ENCODE measurements at regions of chr1 and their contacts with region 1.

Region 1: DNA sequence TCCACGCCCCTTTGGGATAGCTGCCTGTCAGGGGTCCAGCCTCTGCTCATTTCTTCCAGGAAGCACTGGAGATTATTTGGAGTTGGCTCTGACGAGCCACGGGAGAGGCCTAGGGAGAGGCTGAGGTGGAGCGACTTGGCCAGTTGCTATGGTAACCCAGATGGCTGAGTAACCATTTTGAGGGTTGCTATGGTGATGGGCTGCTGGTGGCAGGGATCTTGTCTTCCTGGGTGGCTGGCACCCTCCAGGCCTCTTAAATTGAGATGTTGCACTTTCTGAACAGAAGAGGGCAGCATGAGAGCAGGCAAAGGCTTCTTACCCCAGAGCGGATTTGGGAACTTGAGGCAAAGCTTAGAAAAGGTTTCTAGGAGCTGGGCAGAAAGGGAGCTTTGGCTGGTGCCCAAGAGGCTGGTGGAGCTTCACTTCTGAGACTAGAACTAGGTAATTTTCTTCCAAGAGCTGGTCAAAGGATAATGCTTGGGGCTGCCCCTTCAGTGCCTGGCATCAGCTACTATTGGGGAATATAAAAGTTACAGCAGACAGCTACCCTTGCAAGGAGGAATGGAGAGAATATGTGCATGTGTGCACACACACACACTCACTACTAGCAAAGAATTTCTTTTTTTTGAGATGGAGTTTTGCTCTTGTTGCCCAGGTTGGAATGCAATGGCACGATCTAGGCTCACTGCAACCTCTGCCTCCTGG is 72.5 kb downstream of the NDUFS5 start:
- DNase-seq: peak; percentile 61
- H3K4me3 ChIP-seq: no peak overlapping the region
- H3K27ac ChIP-seq: no peak overlapping the region
- H3K4me1 ChIP-seq: peaks cover 12% of the 10 kb centered on the region
- H3K27me3 ChIP-seq: no peaks in the 10 kb centered on the region
- CTCF ChIP-seq: peak; percentile 65 to 68
- POLR2A ChIP-seq: no peak

Region 2: GRCh38 chr1:38919130-38919529 is 179.6 kb before region 1 on chr1:
- CTCF ChIA-PET with region 1: no interaction called
- POLR2A ChIA-PET with region 1: no interaction called
- dilution Hi-C with region 1: no loop called
- intact Hi-C with region 1: no loop called
- DNase-seq: no peak
- H3K4me3 ChIP-seq: no peak overlapping the region
- H3K27ac ChIP-seq: no peak overlapping the region
- H3K4me1 ChIP-seq: no peaks in the 10 kb centered on the region
- H3K27me3 ChIP-seq: no peaks in the 10 kb centered on the region
- CTCF ChIP-seq: no peak
- POLR2A ChIP-seq: no peak

Region 3: DNA sequence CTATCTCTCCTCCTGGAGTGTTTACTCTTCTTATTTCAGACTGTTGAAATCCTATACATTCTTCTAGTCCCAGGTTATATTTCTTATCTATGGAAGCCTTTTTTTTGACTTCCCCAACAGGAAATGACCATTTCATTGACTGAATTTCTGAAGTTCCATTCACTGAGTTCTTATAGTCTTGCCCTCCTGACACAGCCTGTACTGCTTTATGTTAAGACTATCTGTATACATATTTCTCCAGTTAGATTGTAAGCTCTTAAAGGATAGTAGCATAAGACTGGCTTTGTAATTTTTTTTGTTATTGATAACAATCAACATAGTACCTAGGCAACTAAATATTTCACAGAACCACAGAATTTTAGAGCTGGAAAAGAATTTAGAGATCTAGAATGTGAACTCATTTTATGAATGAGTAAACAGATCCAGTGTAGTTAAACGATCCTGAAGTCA is 90.9 kb after region 1 on chr1:
- CTCF ChIA-PET with region 1: interaction called, 73 read pairs
- POLR2A ChIA-PET with region 1: interaction called, 3 read pairs
- dilution Hi-C with region 1: no loop called
- intact Hi-C with region 1: loop called (anchors 1 kb)
- DNase-seq: peak; percentile 81
- H3K4me3 ChIP-seq: peak overlapping the region in 2 of 3 experiments; percentile 17 to 37
- H3K27ac ChIP-seq: peak overlapping the region; percentile 97
- H3K4me1 ChIP-seq: peaks cover 95% of the 10 kb centered on the region
- H3K27me3 ChIP-seq: no peaks in the 10 kb centered on the region
- CTCF ChIP-seq: no peak
- POLR2A ChIP-seq: no peak

Region 4: DNA sequence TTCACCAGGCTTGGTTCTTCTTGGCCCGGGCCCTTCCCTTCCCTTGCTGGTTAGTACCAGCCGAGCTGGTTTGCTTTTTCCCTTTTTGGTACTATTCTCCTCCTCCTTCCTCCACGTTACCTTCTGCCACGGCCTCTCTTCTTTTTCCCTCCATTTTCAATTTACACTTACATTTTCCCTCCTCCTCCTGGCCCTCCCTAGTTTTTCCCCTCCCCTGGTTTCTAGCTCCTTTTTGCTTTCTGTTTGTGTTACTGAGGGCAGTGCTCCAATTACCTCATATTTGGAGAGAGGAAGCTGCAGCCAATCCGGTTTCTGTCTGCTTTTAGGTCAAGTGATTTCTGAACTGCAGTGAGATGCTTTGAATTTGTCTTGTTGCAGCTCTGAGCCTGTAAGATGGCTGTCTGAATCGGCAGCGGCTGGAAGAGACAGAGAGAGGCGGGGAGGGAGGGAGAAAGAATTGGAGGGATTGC is 169.4 kb after region 1 on chr1:
- CTCF ChIA-PET with region 1: interaction called, 16 read pairs
- POLR2A ChIA-PET with region 1: no interaction called
- dilution Hi-C with region 1: no loop called
- intact Hi-C with region 1: no loop called
- DNase-seq: peak; percentile 78
- H3K4me3 ChIP-seq: peak overlapping the region in 2 of 3 experiments; percentile 9 to 49
- H3K27ac ChIP-seq: peak overlapping the region; percentile 70
- H3K4me1 ChIP-seq: peaks cover 22% of the 10 kb centered on the region
- H3K27me3 ChIP-seq: no peaks in the 10 kb centered on the region
- CTCF ChIP-seq: no peak
- POLR2A ChIP-seq: no peak

Region 5: GRCh38 chr1:39297551-39297950 is 198.9 kb after region 1 on chr1:
- CTCF ChIA-PET with region 1: interaction called, 15 read pairs
- POLR2A ChIA-PET with region 1: no interaction called
- dilution Hi-C with region 1: no loop called
- intact Hi-C with region 1: no loop called
- DNase-seq: no peak
- H3K4me3 ChIP-seq: no peak overlapping the region
- H3K27ac ChIP-seq: no peak overlapping the region
- H3K4me1 ChIP-seq: peaks cover 6% of the 10 kb centered on the region
- H3K27me3 ChIP-seq: no peaks in the 10 kb centered on the region
- CTCF ChIP-seq: no peak
- POLR2A ChIP-seq: no peak

Region 6: GRCh38 chr1:39317910-39318633 is 219.4 kb after region 1 on chr1:
- CTCF ChIA-PET with region 1: interaction called, 25 read pairs
- POLR2A ChIA-PET with region 1: no interaction called
- dilution Hi-C with region 1: no loop called
- intact Hi-C with region 1: loop called (anchors 1 kb)
- DNase-seq: peak; percentile 91
- H3K4me3 ChIP-seq: peak overlapping the region in 2 of 3 experiments; percentile 3 to 33
- H3K27ac ChIP-seq: peak overlapping the region; percentile 71
- H3K4me1 ChIP-seq: peaks cover 24% of the 10 kb centered on the region
- H3K27me3 ChIP-seq: no peaks in the 10 kb centered on the region
- CTCF ChIP-seq: no peak
- POLR2A ChIP-seq: peak; percentile 31

Region 7: GRCh38 chr1:39420493-39420892 is 321.8 kb after region 1 on chr1:
- CTCF ChIA-PET with region 1: interaction called, 10 read pairs
- POLR2A ChIA-PET with region 1: no interaction called
- dilution Hi-C with region 1: no loop called
- intact Hi-C with region 1: no loop called
- DNase-seq: no peak
- H3K4me3 ChIP-seq: no peak overlapping the region
- H3K27ac ChIP-seq: no peak overlapping the region
- H3K4me1 ChIP-seq: peaks cover 10% of the 10 kb centered on the region
- H3K27me3 ChIP-seq: no peaks in the 10 kb centered on the region
- CTCF ChIP-seq: no peak
- POLR2A ChIP-seq: no peak

Region 8: GRCh38 chr1:39653546-39654031 is 554.9 kb after region 1 on chr1:
- CTCF ChIA-PET with region 1: interaction called, 10 read pairs
- POLR2A ChIA-PET with region 1: no interaction called
- dilution Hi-C with region 1: no loop called
- intact Hi-C with region 1: no loop called
- DNase-seq: peak; percentile 73
- H3K4me3 ChIP-seq: no peak overlapping the region
- H3K27ac ChIP-seq: no peak overlapping the region
- H3K4me1 ChIP-seq: no peaks in the 10 kb centered on the region
- H3K27me3 ChIP-seq: peaks cover 9 to 10% of the 10 kb centered on the region in 2 experiments
- CTCF ChIP-seq: peak; percentile 85 to 90
- POLR2A ChIP-seq: no peak

Measured in endothelial cell of umbilical vein (primary cell).